Calu3 (cell line): ENCODE measurements at regions of chr3 and their contacts with region 1.

Region 1: DNA sequence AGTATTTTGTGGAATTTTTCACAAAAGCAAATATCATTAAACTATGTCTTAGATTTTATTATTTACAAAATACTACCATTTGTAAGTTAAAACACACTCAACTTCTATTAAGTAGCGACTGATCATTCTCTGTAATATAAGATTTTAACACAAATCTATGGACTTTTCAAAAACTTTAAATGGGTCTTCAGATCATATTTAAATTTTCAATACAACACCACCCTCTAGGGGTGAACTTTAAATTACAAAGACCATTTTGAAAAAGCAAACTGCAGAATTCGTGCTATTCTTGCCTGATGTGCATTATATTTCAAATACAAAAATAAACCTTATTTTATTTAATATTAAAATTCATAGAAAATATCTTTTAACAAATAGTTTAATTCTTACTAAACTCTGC is 8.2 kb upstream of the VGLL4 start:
- DNase-seq: no peak
- H3K4me3 Mint-ChIP-seq: no peak overlapping the region
- H3K27ac Mint-ChIP-seq: no peak overlapping the region
- H3K4me1 Mint-ChIP-seq: no peaks in the 10 kb centered on the region
- H3K27me3 Mint-ChIP-seq: no peaks in the 10 kb centered on the region
- CTCF ChIP-seq: no peak

Region 2: GRCh38 chr3:11168881-11169805 is 482.8 kb before region 1 on chr3:
- CTCF ChIA-PET with region 1: no interaction called
- intact Hi-C with region 1: no loop called
- DNase-seq: no peak
- H3K4me3 Mint-ChIP-seq: no peak overlapping the region
- H3K27ac Mint-ChIP-seq: no peak overlapping the region
- H3K4me1 Mint-ChIP-seq: peaks cover 7% of the 10 kb centered on the region
- H3K27me3 Mint-ChIP-seq: peaks cover 72% of the 10 kb centered on the region
- CTCF ChIP-seq: no peak

Region 3: GRCh38 chr3:11236595-11237461 is 415.1 kb before region 1 on chr3:
- CTCF ChIA-PET with region 1: no interaction called
- intact Hi-C with region 1: loop called (anchors 5 kb)
- DNase-seq: peak; percentile 91
- H3K4me3 Mint-ChIP-seq: no peak overlapping the region
- H3K27ac Mint-ChIP-seq: no peak overlapping the region
- H3K4me1 Mint-ChIP-seq: peaks cover 10% of the 10 kb centered on the region
- H3K27me3 Mint-ChIP-seq: no peaks in the 10 kb centered on the region
- CTCF ChIP-seq: peak; percentile 40

Region 4: DNA sequence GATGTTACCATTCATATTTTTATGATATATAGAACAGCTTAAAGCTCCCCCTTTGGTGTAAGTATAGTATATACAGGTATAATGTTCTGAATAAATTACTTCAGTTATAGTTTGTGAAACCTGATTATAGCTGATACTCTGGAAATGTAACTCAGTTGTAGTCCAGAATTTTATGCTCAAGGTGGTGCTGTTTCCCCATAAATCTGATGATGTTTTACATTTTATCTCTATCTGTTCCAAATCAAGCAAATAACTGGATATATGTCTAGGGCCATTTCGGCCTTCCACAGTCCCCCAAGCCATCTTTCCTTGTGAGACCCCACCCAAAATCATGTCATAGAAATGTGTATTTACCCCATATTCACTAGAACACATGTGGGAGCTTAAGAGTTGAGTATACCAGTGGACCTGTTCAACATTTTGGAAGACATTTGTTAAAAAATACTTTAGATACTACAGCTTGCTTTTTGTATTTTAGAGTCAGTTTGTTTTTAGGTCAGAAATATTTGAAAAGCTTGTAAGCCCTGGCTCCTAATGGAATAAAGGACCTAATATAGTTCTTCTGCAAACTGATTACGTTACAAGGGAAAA is 272.6 kb before region 1 on chr3:
- CTCF ChIA-PET with region 1: no interaction called
- intact Hi-C with region 1: loop called (anchors 1 kb)
- DNase-seq: peak; percentile 16
- H3K4me3 Mint-ChIP-seq: no peak overlapping the region
- H3K27ac Mint-ChIP-seq: no peak overlapping the region
- H3K4me1 Mint-ChIP-seq: no peaks in the 10 kb centered on the region
- H3K27me3 Mint-ChIP-seq: no peaks in the 10 kb centered on the region
- CTCF ChIP-seq: no peak

Region 5: DNA sequence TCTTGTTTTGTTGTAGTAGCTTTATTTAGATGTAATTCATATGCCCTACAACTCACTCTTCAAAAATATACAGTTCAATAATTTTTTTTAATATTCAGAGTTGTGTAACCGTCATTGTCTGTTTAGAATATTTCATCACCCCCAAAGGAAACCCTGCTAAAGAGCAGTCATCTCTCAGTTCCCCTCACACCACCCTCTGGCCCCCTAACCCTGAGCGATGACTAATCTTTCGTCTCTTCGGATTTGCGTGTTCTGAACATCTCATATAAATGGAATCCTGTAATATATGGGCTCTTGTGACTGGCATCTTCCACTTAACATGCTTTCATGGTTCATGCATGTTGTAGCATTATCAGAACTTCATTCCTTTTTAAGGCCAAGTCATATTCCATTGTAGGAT is 195.9 kb before region 1 on chr3:
- CTCF ChIA-PET with region 1: no interaction called
- intact Hi-C with region 1: no loop called
- DNase-seq: no peak
- H3K4me3 Mint-ChIP-seq: no peak overlapping the region
- H3K27ac Mint-ChIP-seq: no peak overlapping the region
- H3K4me1 Mint-ChIP-seq: no peaks in the 10 kb centered on the region
- H3K27me3 Mint-ChIP-seq: no peaks in the 10 kb centered on the region
- CTCF ChIP-seq: no peak

Region 6: GRCh38 chr3:11600501-11601282 is 51.2 kb before region 1 on chr3:
- CTCF ChIA-PET with region 1: interaction called, 14 read pairs
- intact Hi-C with region 1: no loop called
- DNase-seq: no peak
- H3K4me3 Mint-ChIP-seq: no peak overlapping the region
- H3K27ac Mint-ChIP-seq: no peak overlapping the region
- H3K4me1 Mint-ChIP-seq: peaks cover 13% of the 10 kb centered on the region
- H3K27me3 Mint-ChIP-seq: no peaks in the 10 kb centered on the region
- CTCF ChIP-seq: no peak

Region 7: GRCh38 chr3:11803977-11804892 is 152.3 kb after region 1 on chr3:
- CTCF ChIA-PET with region 1: no interaction called
- intact Hi-C with region 1: loop called (anchors 2 kb)
- DNase-seq: peak; percentile 43
- H3K4me3 Mint-ChIP-seq: no peak overlapping the region
- H3K27ac Mint-ChIP-seq: no peak overlapping the region
- H3K4me1 Mint-ChIP-seq: peaks cover 8% of the 10 kb centered on the region
- H3K27me3 Mint-ChIP-seq: no peaks in the 10 kb centered on the region
- CTCF ChIP-seq: peak; percentile 70